ENCODE measurements at regions of chr21 and their contacts with region 1.

Region 1: DNA sequence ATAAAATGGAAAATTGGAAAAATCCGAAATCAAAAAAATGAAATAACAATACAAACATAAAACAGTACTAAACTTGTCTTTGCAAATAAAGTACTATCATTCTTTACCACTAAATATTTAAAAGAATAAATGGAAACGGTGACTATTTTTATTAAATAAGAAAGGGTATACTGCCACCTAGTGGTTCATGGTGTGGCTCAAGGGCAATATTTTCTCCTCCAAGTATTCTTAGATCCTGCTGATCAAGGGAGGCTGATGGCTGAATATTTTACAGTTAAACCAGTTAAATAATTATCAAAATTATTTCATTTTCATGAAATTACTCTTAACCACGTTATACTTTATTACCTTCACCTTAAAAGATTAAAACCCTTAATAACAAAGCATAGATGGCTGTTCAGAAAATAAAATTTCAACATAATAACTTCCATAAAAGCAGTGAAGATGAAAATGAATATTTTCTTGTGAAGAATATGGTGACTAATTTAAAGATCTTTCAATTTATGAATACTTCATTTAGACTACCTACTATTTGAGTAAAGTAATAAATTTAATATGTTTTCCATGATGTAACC is 1793.9 kb downstream of the NCAM2 start:
- DNase-seq: peak; percentile 57
- H3K4me3 Mint-ChIP-seq: no peak overlapping the region
- H3K27ac Mint-ChIP-seq: no peak overlapping the region
- H3K4me1 Mint-ChIP-seq: no peaks in the 10 kb centered on the region
- H3K27me3 Mint-ChIP-seq: no peaks in the 10 kb centered on the region

Region 2: DNA sequence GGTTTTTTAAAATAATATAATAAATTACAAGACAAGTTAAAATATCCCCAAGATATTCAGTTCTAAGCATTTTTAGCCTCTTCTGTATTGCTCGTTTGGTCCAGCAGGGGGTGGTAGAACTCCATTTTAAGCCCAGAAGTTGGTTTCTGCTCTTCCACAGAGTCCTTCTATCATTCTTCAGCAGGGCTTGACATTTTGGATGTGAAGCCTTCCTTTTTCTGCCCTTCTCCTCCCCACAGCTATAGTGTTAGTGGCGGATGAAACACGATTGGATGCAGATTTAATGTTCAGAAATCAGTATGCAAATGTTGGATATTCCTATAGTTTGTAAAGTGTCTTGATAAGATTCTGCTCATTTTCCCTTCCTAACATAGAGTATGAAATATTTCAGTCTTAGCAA is 1792.4 kb before region 1 on chr21:
- intact Hi-C with region 1: loop called (anchors 5 kb)
- DNase-seq: peak; percentile 74
- H3K4me3 Mint-ChIP-seq: no peak overlapping the region
- H3K27ac Mint-ChIP-seq: no peak overlapping the region
- H3K4me1 Mint-ChIP-seq: peaks cover 5% of the 10 kb centered on the region
- H3K27me3 Mint-ChIP-seq: peaks cover 36% of the 10 kb centered on the region

Region 3: GRCh38 chr21:23281919-23282318 is 489.8 kb after region 1 on chr21:
- intact Hi-C with region 1: no loop called
- DNase-seq: no peak
- H3K4me3 Mint-ChIP-seq: no peak overlapping the region
- H3K27ac Mint-ChIP-seq: no peak overlapping the region
- H3K4me1 Mint-ChIP-seq: no peaks in the 10 kb centered on the region
- H3K27me3 Mint-ChIP-seq: no peaks in the 10 kb centered on the region